Naive thymus-derived CD4-positive, alpha-beta T cell (primary cell): ENCODE measurements at regions of chr16 and their contacts with region 1.

Region 1: DNA sequence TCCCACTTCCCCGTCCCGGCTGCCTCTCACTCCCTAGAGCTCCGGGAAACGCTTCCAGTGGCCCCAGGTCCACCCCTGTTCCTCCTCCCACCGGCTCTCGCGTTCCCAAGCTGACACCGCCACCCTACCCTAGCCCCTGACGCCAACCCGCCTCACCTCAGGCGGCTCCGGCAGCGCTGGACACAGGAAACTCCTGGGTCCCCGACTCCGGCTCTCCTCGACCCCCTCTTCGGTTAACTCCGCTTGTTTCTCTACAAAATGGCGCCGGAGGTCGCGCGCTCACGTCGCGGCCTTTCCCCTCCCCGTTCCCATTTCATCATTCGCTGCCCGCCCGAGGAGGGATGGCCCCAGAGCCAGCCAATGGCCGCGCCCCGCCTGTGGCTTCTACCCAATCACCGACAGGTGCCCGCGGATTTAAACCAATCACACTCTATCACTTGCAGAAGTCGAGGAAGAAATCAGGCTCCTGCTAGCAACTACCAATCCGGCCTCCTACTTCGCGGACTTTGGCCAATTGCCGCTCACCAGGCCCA is at the start of gene CNOT1:
- DNase-seq: peak; percentile 92 to 100 (median 99)
- ATAC-seq: peak; percentile 91
- H3K4me3 ChIP-seq: peak within 1 kb of the TSS; percentile 84
- H3K4me3 Mint-ChIP-seq: peak within 1 kb of the TSS; percentile 94 to 100 (median 98)
- H3K27ac ChIP-seq: peak within 1 kb of the TSS; percentile 96
- H3K27ac Mint-ChIP-seq: peak within 1 kb of the TSS; percentile 99 to 100 (median 100)
- H3K4me1 ChIP-seq: peaks cover 14 to 24% of the 10 kb centered on the region in 2 donors
- H3K4me1 Mint-ChIP-seq: peaks cover 16 to 47% (median 31%) of the 10 kb centered on the region in 7 donors
- H3K27me3 ChIP-seq: no peaks in the 10 kb centered on the region
- H3K27me3 Mint-ChIP-seq: peaks cover 0 to 2% (median 0%) of the 10 kb centered on the region in 5 donors
- total RNA-seq, gene CNOT1: 216 to 249 (median 236) TPM

Region 2: DNA sequence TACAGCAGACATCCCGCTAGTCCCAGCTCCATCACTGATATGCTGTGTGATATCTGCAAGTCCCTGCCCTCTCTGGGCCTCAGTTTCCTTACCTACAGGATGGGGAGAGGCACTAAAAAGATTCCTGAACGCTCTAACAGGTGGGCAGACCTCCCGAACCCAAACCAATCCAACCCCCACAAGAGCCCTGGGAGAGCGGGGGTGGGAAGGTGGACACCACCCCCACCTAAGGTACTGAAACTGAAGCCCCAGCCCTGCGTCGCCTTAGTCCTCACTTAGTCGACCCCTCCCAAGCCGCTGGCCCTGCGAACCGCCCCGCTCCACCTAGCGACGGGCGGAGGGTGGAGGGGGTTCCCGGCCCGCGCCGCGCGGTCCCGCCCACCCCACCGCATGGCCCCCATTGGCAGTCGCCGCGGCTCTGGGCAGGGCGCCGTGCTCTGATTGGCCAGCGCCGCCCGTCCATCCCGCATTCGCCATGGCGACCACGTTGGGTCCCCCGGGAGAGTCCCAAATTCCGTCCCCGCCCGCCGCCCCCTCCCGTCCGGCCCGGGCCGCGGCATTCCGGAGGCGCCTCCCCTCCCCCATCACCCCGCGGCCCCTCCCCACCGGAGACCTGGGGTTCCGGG is 1093.8 kb before region 1 on chr16:
- CTCF ChIA-PET with region 1: no interaction called
- POLR2A ChIA-PET with region 1: no interaction called
- intact Hi-C with region 1: loop called (anchors 5 to 10 kb)
- DNase-seq: peak; percentile 77 to 94 (median 87)
- ATAC-seq: peak; percentile 95
- H3K4me3 ChIP-seq: peak overlapping the region; percentile 44
- H3K4me3 Mint-ChIP-seq: peak overlapping the region; percentile 77 to 89 (median 82)
- H3K27ac ChIP-seq: peak overlapping the region; percentile 93
- H3K27ac Mint-ChIP-seq: peak overlapping the region; percentile 82 to 96 (median 94)
- H3K4me1 ChIP-seq: peaks cover 54 to 60% of the 10 kb centered on the region in 2 donors
- H3K4me1 Mint-ChIP-seq: peaks cover 57 to 79% (median 74%) of the 10 kb centered on the region in 7 donors
- H3K27me3 ChIP-seq: no peaks in the 10 kb centered on the region
- H3K27me3 Mint-ChIP-seq: no peaks in the 10 kb centered on the region

Region 3: DNA sequence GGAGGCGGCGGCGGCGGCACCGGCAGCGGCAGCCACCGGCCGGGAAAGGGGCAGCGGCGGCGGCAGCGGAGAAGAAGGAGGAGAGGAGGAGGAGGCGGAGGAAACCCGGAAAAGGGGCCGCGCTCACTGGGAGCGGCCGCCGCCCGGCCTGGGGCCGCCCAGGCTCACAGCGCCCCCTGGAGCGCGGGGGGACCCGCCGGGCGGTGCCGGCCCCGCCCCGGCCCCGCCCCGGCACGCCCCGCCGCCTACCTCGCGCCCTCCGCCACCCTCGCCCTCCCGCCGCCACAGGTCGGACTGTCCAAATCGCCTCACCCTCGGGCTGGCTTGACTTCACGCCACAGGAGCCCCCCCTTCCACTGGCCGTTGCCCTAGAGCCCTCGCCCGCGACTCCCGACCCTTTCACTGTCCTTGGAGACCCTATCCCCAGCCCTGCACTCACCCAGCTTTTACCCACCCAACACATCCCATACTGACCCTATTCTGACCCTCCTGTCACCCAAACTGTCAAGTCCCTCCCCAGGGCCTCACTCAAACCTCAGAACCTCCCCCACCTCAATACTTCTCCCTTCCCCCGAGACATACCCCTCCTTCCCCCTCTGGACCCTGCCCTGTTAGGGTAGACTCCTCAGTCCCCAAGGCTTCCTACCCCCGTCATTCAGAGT is 431.5 kb before region 1 on chr16 and contains the start of gene CSNK2A2:
- CTCF ChIA-PET with region 1: no interaction called
- POLR2A ChIA-PET with region 1: no interaction called
- intact Hi-C with region 1: loop called in 1 of 2 experiments (anchors 2 kb)
- DNase-seq: peak; percentile 38 to 81 (median 60)
- ATAC-seq: peak; percentile 99
- H3K4me3 ChIP-seq: peak within 1 kb of the TSS; percentile 63
- H3K4me3 Mint-ChIP-seq: peak within 1 kb of the TSS; percentile 84 to 93 (median 88)
- H3K27ac ChIP-seq: peak within 1 kb of the TSS; percentile 62
- H3K27ac Mint-ChIP-seq: peak within 1 kb of the TSS; percentile 61 to 90 (median 82)
- H3K4me1 ChIP-seq: peaks cover 21 to 22% of the 10 kb centered on the region in 2 donors
- H3K4me1 Mint-ChIP-seq: peaks cover 30 to 51% (median 46%) of the 10 kb centered on the region in 7 donors
- H3K27me3 ChIP-seq: no peaks in the 10 kb centered on the region
- H3K27me3 Mint-ChIP-seq: peaks cover 9 to 33% (median 13%) of the 10 kb centered on the region in 5 donors
- total RNA-seq, gene CSNK2A2: 46.5 to 70.0 (median 67.9) TPM

Region 4: GRCh38 chr16:58392215-58393137 is 237.2 kb before region 1 on chr16 and contains the start of gene GINS3:
- CTCF ChIA-PET with region 1: no interaction called
- POLR2A ChIA-PET with region 1: no interaction called
- intact Hi-C with region 1: loop called (anchors 1 kb)
- DNase-seq: peak; percentile 67 to 83 (median 81)
- ATAC-seq: peak; percentile 96
- H3K4me3 ChIP-seq: peak within 1 kb of the TSS; percentile 99
- H3K4me3 Mint-ChIP-seq: peak within 1 kb of the TSS; percentile 91 to 100 (median 98)
- H3K27ac ChIP-seq: peak within 1 kb of the TSS; percentile 80
- H3K27ac Mint-ChIP-seq: peak within 1 kb of the TSS; percentile 89 to 99 (median 95)
- H3K4me1 ChIP-seq: peaks cover 5 to 6% of the 10 kb centered on the region in 2 donors
- H3K4me1 Mint-ChIP-seq: peaks cover 3 to 28% (median 16%) of the 10 kb centered on the region in 7 donors
- H3K27me3 ChIP-seq: no peaks in the 10 kb centered on the region
- H3K27me3 Mint-ChIP-seq: peaks cover 0 to 21% (median 0%) of the 10 kb centered on the region in 5 donors
- total RNA-seq, gene GINS3: 0.66 to 13.3 (median 1.4) TPM

Region 5: GRCh38 chr16:58578642-58579041 is 51.0 kb before region 1 on chr16:
- CTCF ChIA-PET with region 1: no interaction called
- POLR2A ChIA-PET with region 1: no interaction called
- intact Hi-C with region 1: loop called in 1 of 2 experiments (anchors 5 kb)
- DNase-seq: no peak
- ATAC-seq: no peak
- H3K4me3 ChIP-seq: no peak overlapping the region
- H3K4me3 Mint-ChIP-seq: no peak overlapping the region
- H3K27ac ChIP-seq: no peak overlapping the region
- H3K27ac Mint-ChIP-seq: peak overlapping the region in 1 of 9 donors; percentile 43
- H3K4me1 ChIP-seq: no peaks in the 10 kb centered on the region
- H3K4me1 Mint-ChIP-seq: no peaks in the 10 kb centered on the region
- H3K27me3 ChIP-seq: no peaks in the 10 kb centered on the region
- H3K27me3 Mint-ChIP-seq: no peaks in the 10 kb centered on the region

Region 6: DNA sequence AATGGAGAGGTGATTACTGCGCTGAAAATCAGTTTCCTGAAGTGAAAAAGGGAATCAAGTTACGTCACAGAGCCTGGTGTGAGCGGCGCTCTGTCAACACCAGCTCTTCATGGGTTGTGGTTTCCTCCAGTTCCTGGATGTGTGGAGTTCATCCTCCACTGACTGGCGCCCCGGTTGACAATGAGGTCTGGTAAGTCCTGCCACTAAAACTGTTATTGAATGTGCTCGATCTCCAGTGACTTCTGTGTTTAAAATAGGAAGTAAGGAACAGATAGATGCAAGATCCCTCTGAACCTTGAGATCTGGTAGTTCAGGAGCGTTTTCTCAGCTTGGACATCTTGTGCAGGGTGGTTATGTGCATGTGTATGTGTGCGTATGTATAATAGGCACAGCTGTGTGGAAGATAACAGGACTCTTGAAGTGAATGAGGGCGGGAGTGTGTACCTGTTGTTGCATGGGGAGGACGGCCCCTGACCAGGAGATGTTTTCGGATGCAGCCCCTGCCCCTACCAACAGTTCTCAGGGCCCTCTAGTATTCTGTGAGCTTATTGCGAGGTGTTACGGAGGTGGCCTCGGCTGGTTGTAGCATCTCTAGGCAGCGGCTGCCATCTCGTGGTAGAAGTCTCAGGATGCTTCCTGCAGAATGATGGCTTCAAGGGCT is 126.5 kb after region 1 on chr16:
- CTCF ChIA-PET with region 1: no interaction called
- POLR2A ChIA-PET with region 1: interaction called, 3 read pairs
- intact Hi-C with region 1: loop called in 1 of 2 experiments (anchors 1 kb)
- DNase-seq: peak; percentile 44 to 82 (median 76)
- ATAC-seq: peak; percentile 94
- H3K4me3 ChIP-seq: peak overlapping the region; percentile 28
- H3K4me3 Mint-ChIP-seq: peak overlapping the region; percentile 56 to 79 (median 70)
- H3K27ac ChIP-seq: peak overlapping the region; percentile 19
- H3K27ac Mint-ChIP-seq: peak overlapping the region; percentile 32 to 94 (median 87)
- H3K4me1 ChIP-seq: peaks cover 0 to 7% of the 10 kb centered on the region in 2 donors
- H3K4me1 Mint-ChIP-seq: peaks cover 7 to 10% (median 9%) of the 10 kb centered on the region in 7 donors
- H3K27me3 ChIP-seq: no peaks in the 10 kb centered on the region
- H3K27me3 Mint-ChIP-seq: peaks cover 0 to 8% (median 0%) of the 10 kb centered on the region in 5 donors